Caco-2 (cell line): ENCODE measurements at regions of chr16 and their contacts with region 1.

Region 1: GRCh38 chr16:24834459-24835335 is 11.1 kb upstream of the SLC5A11 start:
- DNase-seq: peak; percentile 56 to 58
- H3K4me3 ChIP-seq: no peak overlapping the region
- H3K4me3 Mint-ChIP-seq: no peak overlapping the region
- H3K27ac Mint-ChIP-seq: no peak overlapping the region
- H3K4me1 ChIP-seq: peaks cover 23% of the 10 kb centered on the region
- H3K4me1 Mint-ChIP-seq: peaks cover 7% of the 10 kb centered on the region
- H3K27me3 ChIP-seq: no peaks in the 10 kb centered on the region
- H3K27me3 Mint-ChIP-seq: no peaks in the 10 kb centered on the region
- CTCF ChIP-seq: peak; percentile 47 to 79

Region 2: DNA sequence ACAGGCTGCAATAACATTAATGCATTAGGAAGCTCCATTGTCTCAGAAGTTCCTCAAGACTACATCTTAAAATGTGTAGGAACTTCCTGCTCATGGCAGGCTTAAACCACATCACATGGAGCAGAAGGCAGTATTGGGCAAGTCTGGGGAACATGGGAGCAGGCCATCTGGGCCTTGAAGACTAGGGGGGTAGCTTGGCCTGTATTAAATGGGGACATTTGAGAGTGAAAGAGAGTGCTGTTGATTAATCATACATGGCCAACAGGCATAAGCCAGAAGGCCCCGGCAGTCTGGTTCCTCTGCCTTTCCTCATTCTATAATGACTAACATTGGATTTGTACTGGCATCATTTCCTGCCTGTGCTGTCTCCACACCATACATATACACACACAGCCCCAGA is 14.2 kb before region 1 on chr16:
- CTCF ChIA-PET with region 1: interaction called, 4 read pairs
- POLR2A ChIA-PET with region 1: interaction called, 10 read pairs
- intact Hi-C with region 1: no loop called
- DNase-seq: no peak
- H3K4me3 ChIP-seq: no peak overlapping the region
- H3K4me3 Mint-ChIP-seq: no peak overlapping the region
- H3K27ac Mint-ChIP-seq: no peak overlapping the region
- H3K4me1 ChIP-seq: no peaks in the 10 kb centered on the region
- H3K4me1 Mint-ChIP-seq: no peaks in the 10 kb centered on the region
- H3K27me3 ChIP-seq: no peaks in the 10 kb centered on the region
- H3K27me3 Mint-ChIP-seq: no peaks in the 10 kb centered on the region
- CTCF ChIP-seq: no peak

Region 3: GRCh38 chr16:24915576-24915975 is 80.9 kb after region 1 on chr16:
- CTCF ChIA-PET with region 1: interaction called, 5 read pairs
- POLR2A ChIA-PET with region 1: no interaction called
- intact Hi-C with region 1: loop called (anchors 1 kb)
- DNase-seq: peak in 1 of 2 experiments; percentile 15
- H3K4me3 ChIP-seq: no peak overlapping the region
- H3K4me3 Mint-ChIP-seq: no peak overlapping the region
- H3K27ac Mint-ChIP-seq: no peak overlapping the region
- H3K4me1 ChIP-seq: no peaks in the 10 kb centered on the region
- H3K4me1 Mint-ChIP-seq: no peaks in the 10 kb centered on the region
- H3K27me3 ChIP-seq: no peaks in the 10 kb centered on the region
- H3K27me3 Mint-ChIP-seq: no peaks in the 10 kb centered on the region
- CTCF ChIP-seq: no peak

Region 4: DNA sequence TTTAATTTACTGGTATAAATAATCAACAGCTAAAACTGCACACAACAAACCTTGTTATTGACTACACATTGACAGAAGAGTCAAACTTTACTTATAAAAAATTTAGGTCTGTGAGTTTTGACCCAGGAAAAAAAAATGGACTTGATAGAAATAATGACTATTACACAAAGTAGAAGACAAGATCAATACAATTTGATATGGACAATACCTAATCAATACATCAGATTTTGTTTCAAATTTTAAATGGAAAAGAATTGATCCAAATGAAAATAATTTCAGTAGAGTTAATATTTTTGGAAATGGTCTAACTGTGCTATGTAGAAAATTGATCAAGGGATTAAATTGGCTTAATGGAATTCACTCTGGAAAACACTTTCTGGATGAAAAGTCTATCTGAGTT is 514.6 kb after region 1 on chr16:
- CTCF ChIA-PET with region 1: no interaction called
- POLR2A ChIA-PET with region 1: no interaction called
- intact Hi-C with region 1: no loop called
- DNase-seq: no peak
- H3K4me3 ChIP-seq: no peak overlapping the region
- H3K4me3 Mint-ChIP-seq: no peak overlapping the region
- H3K27ac Mint-ChIP-seq: no peak overlapping the region
- H3K4me1 ChIP-seq: no peaks in the 10 kb centered on the region
- H3K4me1 Mint-ChIP-seq: no peaks in the 10 kb centered on the region
- H3K27me3 ChIP-seq: no peaks in the 10 kb centered on the region
- H3K27me3 Mint-ChIP-seq: no peaks in the 10 kb centered on the region
- CTCF ChIP-seq: no peak